Body of pancreas (tissue), 4 donors: ENCODE measurements at regions of chr1 and their contacts with region 1.

Region 1: DNA sequence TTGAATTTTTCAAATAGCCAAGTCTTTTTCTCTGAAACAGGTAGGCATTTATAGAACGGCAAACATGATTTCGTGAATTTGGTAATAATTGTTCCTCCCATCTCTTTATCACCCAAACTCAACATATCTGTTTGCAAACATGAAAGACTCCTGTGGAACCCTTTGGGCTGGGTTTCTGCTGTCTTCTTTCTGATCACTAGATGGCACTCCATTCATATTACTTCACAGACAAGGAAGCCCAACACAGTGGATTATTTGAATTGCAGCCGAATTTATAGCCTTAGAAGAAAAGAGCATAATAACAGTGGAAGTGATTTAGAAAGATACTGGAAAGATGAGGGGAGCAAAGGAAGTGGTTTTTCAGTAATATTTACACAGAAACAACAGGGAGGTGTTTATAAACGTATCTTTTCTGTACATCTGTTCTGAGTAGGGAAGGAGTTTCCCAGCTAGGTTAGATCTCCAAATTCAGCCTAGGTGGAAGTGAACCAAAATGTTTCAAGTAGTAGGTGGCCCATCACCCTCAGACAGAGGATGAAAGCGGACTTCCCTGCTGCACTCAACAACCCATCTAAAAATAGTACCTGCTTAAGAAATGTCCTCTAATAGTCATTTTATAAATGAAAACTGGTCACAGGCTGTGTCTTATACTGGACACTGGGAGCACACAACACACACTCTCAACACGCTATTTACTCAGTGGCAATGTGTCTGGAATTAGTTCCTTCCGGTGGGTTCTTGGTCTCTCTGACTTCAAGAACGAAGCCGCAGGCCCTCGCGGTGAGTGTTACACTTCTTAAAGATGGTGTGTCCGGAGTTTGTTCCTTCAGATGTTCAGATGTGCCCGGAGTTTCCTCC is 67.6 kb downstream of the MAP3K21 start:
- DNase-seq: peak; percentile 28 to 60 (median 36)
- ATAC-seq: peak; percentile 83
- H3K4me3 ChIP-seq: no peak overlapping the region
- H3K27ac ChIP-seq: no peak overlapping the region
- H3K4me1 ChIP-seq: no peaks in the 10 kb centered on the region
- H3K27me3 ChIP-seq: no peaks in the 10 kb centered on the region
- CTCF ChIP-seq: peak; percentile 48 to 83 (median 79)
- POLR2A ChIP-seq: no peak

Region 2: DNA sequence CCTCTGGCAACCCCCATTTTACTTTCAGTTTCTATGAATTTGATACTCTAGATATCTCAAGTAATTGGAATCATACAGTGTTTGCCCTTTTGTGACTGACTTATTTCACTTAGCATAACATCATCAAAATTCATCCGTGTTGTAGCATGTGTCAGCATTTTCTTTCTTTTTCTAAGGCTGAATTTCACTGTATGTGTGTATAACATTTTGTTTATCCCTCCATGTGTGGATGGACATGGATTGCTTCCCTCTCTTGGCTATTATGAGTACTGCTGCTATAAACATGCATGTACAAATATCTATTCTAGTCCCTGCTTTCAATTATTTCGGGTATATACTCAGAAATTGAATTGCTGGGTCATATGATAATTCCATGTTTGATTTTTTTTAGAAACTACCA is 29.7 kb after region 1 on chr1:
- intact Hi-C with region 1: no loop called
- DNase-seq: no peak
- ATAC-seq: no peak
- H3K4me3 ChIP-seq: no peak overlapping the region
- H3K27ac ChIP-seq: no peak overlapping the region
- H3K4me1 ChIP-seq: no peaks in the 10 kb centered on the region
- H3K27me3 ChIP-seq: no peaks in the 10 kb centered on the region
- CTCF ChIP-seq: peak in 2 of 7 experiments; percentile 11 to 17
- POLR2A ChIP-seq: no peak

Region 3: DNA sequence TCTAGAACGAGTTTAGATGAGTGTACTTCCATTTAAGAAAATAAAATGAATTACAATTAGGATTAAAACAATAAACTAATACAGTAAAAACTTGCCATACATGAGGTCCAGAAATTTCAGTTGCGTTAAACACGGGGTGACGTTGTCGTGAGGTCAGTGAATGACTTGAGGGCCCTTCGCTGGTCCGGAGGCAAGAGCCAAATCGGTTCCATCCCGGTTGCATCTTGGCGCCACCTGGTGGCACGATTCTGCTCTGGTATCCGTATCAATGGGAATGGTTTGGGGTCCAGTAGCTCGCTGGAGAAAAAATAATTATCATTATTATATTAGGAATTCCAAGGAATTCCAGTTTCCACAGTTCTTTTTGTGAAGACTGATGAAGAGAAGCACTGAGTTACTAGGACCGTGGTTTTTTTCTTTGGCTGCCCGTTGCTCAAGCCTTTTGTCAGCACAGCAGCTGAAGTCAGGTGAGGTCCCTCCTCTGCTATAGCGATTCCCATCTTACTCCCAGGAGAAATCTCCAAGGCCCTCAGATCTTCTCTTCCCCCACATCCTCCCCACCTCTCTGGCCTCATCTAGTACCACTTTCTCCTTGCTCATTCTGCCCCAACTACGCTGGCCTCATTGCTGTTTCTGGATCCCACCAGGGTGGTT is 670.8 kb after region 1 on chr1:
- intact Hi-C with region 1: loop called (anchors 5 kb)
- DNase-seq: peak; percentile 78 to 89 (median 81)
- ATAC-seq: peak; percentile 55
- H3K4me3 ChIP-seq: no peak overlapping the region
- H3K27ac ChIP-seq: no peak overlapping the region
- H3K4me1 ChIP-seq: peaks cover 3% of the 10 kb centered on the region
- H3K27me3 ChIP-seq: no peaks in the 10 kb centered on the region
- CTCF ChIP-seq: peak; percentile 65 to 89 (median 73)
- POLR2A ChIP-seq: no peak